ENCODE measurements at regions of chr10 and their contacts with region 1.

Region 1: GRCh38 chr10:114821293-114821914 is at the start of gene FHIP2A:
- DNase-seq: peak; percentile 78
- H3K4me3 Mint-ChIP-seq: peak within 1 kb of the TSS; percentile 96
- H3K27ac Mint-ChIP-seq: peak within 1 kb of the TSS; percentile 94
- H3K4me1 Mint-ChIP-seq: peaks cover 40% of the 10 kb centered on the region
- H3K27me3 Mint-ChIP-seq: peaks cover 17% of the 10 kb centered on the region
- total RNA-seq, gene FHIP2A: 23.3 to 34.2 TPM

Region 2: DNA sequence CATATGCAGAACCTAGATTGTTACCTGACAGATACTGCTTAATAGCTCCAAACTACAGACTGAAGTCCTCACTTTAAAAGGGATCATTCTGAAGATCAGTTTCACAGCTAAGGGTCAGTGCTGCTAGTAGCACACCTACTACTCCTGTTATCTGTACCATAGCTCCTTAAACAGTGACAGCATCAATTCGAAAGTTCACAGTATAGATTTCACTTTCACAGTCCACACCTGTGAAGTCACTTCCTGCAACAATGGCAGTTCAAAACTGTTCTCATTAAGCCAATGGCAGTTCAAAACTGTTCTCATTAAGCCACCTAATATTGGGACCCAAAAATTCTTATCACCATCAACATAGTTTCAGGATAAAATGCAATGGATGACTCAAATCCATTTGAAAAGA is 10.5 kb before region 1 on chr10:
- CTCF ChIA-PET with region 1: interaction called, 36 read pairs
- POLR2A ChIA-PET with region 1: no interaction called
- DNase-seq: peak; percentile 20
- H3K4me3 Mint-ChIP-seq: no peak overlapping the region
- H3K27ac Mint-ChIP-seq: peak overlapping the region; percentile 88
- H3K4me1 Mint-ChIP-seq: peaks cover 28% of the 10 kb centered on the region
- H3K27me3 Mint-ChIP-seq: peaks cover 5% of the 10 kb centered on the region

Region 3: GRCh38 chr10:114837690-114838089 is 16.3 kb after region 1 on chr10:
- CTCF ChIA-PET with region 1: interaction called, 15 read pairs
- POLR2A ChIA-PET with region 1: interaction called, 5 read pairs
- DNase-seq: no peak
- H3K4me3 Mint-ChIP-seq: no peak overlapping the region
- H3K27ac Mint-ChIP-seq: no peak overlapping the region
- H3K4me1 Mint-ChIP-seq: peaks cover 2% of the 10 kb centered on the region
- H3K27me3 Mint-ChIP-seq: no peaks in the 10 kb centered on the region

Region 4: DNA sequence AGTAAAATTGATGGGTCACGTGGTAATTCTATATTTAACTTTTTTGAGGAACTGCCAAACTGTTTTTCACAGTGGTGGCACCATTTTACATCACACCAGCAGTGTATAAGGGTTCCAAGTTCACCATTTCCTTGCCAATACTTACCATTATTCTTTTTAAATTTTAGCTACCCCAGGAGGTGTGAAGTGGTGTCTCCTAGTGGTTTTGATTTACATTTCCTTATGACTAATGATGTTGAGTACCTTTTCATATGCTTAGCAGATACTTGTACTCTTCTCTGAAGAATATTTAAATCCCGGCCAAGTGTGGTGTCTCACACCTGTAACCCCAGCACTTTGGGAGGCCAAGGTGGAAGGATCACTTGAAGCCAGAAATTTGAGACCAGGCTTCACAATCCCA is 28.7 kb after region 1 on chr10:
- CTCF ChIA-PET with region 1: interaction called, 15 read pairs
- POLR2A ChIA-PET with region 1: no interaction called
- DNase-seq: no peak
- H3K4me3 Mint-ChIP-seq: no peak overlapping the region
- H3K27ac Mint-ChIP-seq: no peak overlapping the region
- H3K4me1 Mint-ChIP-seq: peaks cover 2% of the 10 kb centered on the region
- H3K27me3 Mint-ChIP-seq: no peaks in the 10 kb centered on the region

Region 5: DNA sequence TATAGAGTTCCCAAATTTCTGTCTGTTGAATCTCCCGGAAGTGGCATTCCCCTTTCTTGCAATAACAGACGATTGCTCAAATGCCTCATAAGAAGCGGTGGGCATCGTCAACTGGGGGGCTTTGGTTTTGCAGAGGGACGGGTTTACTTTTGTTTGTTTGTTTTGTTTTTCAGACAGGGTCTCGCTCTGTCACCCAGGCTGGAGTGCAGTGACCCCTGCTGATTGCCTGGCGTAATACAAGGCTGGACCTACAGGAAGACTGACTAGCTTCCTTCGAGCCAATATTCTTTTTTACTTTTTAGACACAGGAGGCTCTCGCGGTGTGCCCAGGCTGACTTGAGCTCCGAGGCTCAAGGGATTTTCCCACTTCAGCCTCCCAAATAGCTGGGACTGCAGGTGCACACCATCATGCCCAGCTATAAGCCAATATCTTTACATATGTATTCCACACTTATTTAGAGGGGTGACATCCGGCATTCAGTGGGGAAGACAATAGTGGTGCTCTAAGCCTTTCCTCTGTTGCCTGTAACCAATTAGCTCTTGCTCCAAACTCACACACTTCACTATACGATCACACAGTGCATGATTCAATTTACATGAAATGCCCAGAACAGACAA is 58.2 kb after region 1 on chr10:
- CTCF ChIA-PET with region 1: interaction called, 16 read pairs
- POLR2A ChIA-PET with region 1: no interaction called
- DNase-seq: peak; percentile 56
- H3K4me3 Mint-ChIP-seq: no peak overlapping the region
- H3K27ac Mint-ChIP-seq: no peak overlapping the region
- H3K4me1 Mint-ChIP-seq: peaks cover 18% of the 10 kb centered on the region
- H3K27me3 Mint-ChIP-seq: peaks cover 28% of the 10 kb centered on the region

Region 6: GRCh38 chr10:115026056-115026745 is 204.8 kb after region 1 on chr10:
- CTCF ChIA-PET with region 1: no interaction called
- POLR2A ChIA-PET with region 1: no interaction called
- DNase-seq: no peak
- H3K4me3 Mint-ChIP-seq: no peak overlapping the region
- H3K27ac Mint-ChIP-seq: no peak overlapping the region
- H3K4me1 Mint-ChIP-seq: no peaks in the 10 kb centered on the region
- H3K27me3 Mint-ChIP-seq: peaks cover 6% of the 10 kb centered on the region

Measured in activated CD4-positive, alpha-beta T cell treated with anti-CD3 and anti-CD28 coated beads, Interleukin-2, amount 10 ng/mL, durations not matched to agents 7 days and 5 days (primary cell).